Mammary epithelial cell (primary cell): ENCODE measurements at regions of chr19 and their contacts with region 1.

Region 1: GRCh38 chr19:925526-926322 is at the start of gene ARID3A:
- DNase-seq: peak; percentile 82
- H3K4me3 ChIP-seq: peak within 1 kb of the TSS; percentile 72 to 98 (median 82)
- H3K27ac ChIP-seq: peak within 1 kb of the TSS; percentile 45
- H3K4me1 ChIP-seq: peaks cover 7% of the 10 kb centered on the region
- H3K27me3 ChIP-seq: no peaks in the 10 kb centered on the region
- CTCF ChIP-seq: no peak
- total RNA-seq, gene ARID3A: 8.2 to 17.4 TPM

Region 2: DNA sequence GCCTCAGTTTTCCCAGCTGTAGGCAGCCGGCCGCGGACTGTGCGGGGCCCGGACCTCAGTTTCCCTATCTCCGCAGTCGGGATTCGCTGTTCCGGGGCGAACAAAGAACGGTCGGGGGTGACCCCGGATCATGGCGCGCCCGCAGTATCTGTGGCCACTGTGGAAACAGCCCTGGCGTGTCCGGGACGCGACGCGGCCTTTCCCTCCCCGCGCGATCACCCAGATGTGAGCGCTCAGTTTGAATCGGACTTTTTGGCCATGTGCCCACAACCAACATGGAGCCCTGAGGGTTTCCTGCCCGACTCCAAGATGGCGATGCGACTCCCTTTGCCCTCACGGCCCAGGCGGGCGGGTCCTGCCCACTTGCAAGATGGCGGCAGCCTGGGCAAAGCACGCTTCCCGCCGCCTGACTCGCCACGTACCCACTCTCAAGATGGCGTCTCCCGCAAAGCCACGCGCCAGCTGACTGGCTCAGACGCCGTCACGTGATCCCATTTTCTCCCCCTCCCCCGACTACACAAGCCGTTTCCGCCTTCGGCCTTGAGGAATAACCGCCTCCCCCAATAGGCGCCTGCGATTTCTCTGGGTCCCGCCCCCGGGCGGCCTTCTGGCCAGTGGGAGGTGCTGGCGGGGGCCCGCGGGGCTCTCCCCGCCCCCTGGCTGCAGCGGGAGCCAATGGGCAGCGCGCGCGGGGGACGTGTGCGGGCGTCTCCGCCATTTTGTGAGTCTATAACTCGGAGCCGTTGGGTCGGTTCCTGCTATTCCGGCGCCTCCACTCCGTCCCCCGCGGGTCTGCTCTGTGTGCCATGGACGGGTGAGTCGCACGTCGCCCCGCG is 128.8 kb before region 1 on chr19 and contains the start of gene PTBP1:
- CTCF ChIA-PET with region 1: no interaction called
- dilution Hi-C with region 1: no loop called
- in situ Hi-C with region 1: no loop called
- intact Hi-C with region 1: loop called (anchors 1 kb)
- DNase-seq: peak; percentile 100
- H3K4me3 ChIP-seq: peak within 1 kb of the TSS; percentile 82 to 97 (median 92)
- H3K27ac ChIP-seq: peak within 1 kb of the TSS; percentile 68
- H3K4me1 ChIP-seq: peaks cover 26% of the 10 kb centered on the region
- H3K27me3 ChIP-seq: no peaks in the 10 kb centered on the region
- CTCF ChIP-seq: no peak
- total RNA-seq, gene PTBP1: 88.9 to 383 TPM

Region 3: DNA sequence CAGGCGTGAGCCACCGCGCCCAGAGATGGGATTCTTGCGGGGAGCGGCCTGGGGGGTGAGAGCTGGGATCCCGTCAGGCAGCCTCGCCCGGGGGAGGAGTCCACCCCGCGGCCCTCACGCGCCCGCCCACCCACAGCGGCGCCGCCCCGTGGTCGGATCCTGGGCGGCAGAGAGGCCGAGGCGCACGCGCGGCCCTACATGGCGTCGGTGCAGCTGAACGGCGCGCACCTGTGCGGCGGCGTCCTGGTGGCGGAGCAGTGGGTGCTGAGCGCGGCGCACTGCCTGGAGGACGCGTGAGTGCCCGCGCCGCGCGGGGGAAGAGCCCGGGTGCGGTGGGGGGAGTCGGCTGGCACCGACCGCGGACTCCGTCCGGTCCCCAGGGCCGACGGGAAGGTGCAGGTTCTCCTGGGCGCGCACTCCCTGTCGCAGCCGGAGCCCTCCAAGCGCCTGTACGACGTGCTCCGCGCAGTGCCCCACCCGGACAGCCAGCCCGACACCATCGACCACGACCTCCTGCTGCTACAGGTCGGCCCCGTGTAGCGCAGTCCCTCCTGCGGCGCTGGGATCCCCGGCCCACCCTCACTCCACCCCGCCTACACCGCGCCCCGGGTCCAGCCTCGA is 65.1 kb before region 1 on chr19:
- CTCF ChIA-PET with region 1: no interaction called
- dilution Hi-C with region 1: no loop called
- in situ Hi-C with region 1: no loop called
- intact Hi-C with region 1: loop called (anchors 1 kb)
- DNase-seq: peak; percentile 61
- H3K4me3 ChIP-seq: peak overlapping the region in 1 of 3 experiments; percentile 20
- H3K27ac ChIP-seq: no peak overlapping the region
- H3K4me1 ChIP-seq: peaks cover 4% of the 10 kb centered on the region
- H3K27me3 ChIP-seq: no peaks in the 10 kb centered on the region
- CTCF ChIP-seq: no peak

Region 4: DNA sequence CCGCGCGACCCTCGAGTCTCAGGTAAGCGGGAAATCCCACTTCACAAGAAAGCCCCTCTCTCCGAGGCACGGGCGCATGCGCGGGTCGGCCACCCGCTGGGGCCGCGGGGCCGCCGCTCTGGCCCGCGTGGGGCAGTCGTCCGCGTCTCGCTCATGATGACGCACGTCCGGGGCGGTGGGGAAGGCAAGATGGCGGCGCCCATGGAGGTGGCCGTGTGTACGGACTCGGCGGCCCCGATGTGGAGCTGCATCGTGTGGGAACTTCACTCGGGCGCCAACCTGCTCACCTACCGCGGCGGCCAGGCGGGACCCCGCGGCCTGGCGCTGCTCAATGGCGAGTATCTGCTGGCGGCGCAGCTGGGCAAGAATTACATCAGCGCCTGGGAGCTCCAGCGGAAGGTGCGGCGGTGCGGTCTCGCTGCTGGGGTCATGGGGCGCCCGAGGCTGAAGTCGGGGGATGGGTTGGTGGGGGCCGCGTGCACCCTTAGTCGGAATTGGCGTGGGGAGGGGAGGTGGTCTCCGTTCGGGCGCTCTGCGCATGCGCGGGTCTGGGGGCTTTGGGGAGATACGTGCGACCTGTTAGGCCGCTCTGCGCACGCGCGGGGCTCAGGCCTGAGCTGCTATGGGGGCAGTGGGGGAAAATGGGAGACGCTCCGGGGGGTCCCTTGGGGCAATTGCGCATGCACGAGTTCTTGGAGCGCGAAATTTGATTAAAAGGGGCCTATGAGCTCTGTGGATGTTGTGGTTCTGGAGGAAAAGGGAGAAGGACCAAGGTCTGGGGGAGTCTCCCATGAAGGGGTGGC is 58.6 kb after region 1 on chr19 and contains the start of gene WDR18:
- CTCF ChIA-PET with region 1: no interaction called
- dilution Hi-C with region 1: no loop called
- in situ Hi-C with region 1: loop called (anchors 5 kb)
- intact Hi-C with region 1: loop called (anchors 1 kb)
- DNase-seq: peak; percentile 83
- H3K4me3 ChIP-seq: peak within 1 kb of the TSS; percentile 79 to 99 (median 99)
- H3K27ac ChIP-seq: peak within 1 kb of the TSS; percentile 81
- H3K4me1 ChIP-seq: peaks cover 15% of the 10 kb centered on the region
- H3K27me3 ChIP-seq: no peaks in the 10 kb centered on the region
- CTCF ChIP-seq: peak in 1 of 2 donors; percentile 21
- total RNA-seq, gene WDR18: 42.0 to 84.1 TPM

Region 5: GRCh38 chr19:1001538-1002166 is 75.9 kb after region 1 on chr19:
- CTCF ChIA-PET with region 1: no interaction called
- dilution Hi-C with region 1: no loop called
- in situ Hi-C with region 1: no loop called
- intact Hi-C with region 1: loop called (anchors 1 kb)
- DNase-seq: no peak
- H3K4me3 ChIP-seq: no peak overlapping the region
- H3K27ac ChIP-seq: no peak overlapping the region
- H3K4me1 ChIP-seq: peaks cover 5% of the 10 kb centered on the region
- H3K27me3 ChIP-seq: peaks cover 2% of the 10 kb centered on the region
- CTCF ChIP-seq: peak; percentile 55 to 87

Region 6: GRCh38 chr19:1103708-1104310 is 178.1 kb after region 1 on chr19 and contains the start of gene GPX4:
- CTCF ChIA-PET with region 1: no interaction called
- dilution Hi-C with region 1: no loop called
- in situ Hi-C with region 1: no loop called
- intact Hi-C with region 1: loop called (anchors 5 kb)
- DNase-seq: peak; percentile 99
- H3K4me3 ChIP-seq: peak within 1 kb of the TSS; percentile 71 to 75 (median 74)
- H3K27ac ChIP-seq: peak within 1 kb of the TSS; percentile 79
- H3K4me1 ChIP-seq: peaks cover 47% of the 10 kb centered on the region
- H3K27me3 ChIP-seq: no peaks in the 10 kb centered on the region
- CTCF ChIP-seq: no peak
- total RNA-seq, gene GPX4: 154 to 216 TPM

Region 7: GRCh38 chr19:1189419-1189818 is 263.7 kb after region 1 on chr19:
- CTCF ChIA-PET with region 1: no interaction called
- dilution Hi-C with region 1: no loop called
- in situ Hi-C with region 1: no loop called
- intact Hi-C with region 1: loop called (anchors 5 kb)
- DNase-seq: peak; percentile 55
- H3K4me3 ChIP-seq: no peak overlapping the region
- H3K27ac ChIP-seq: no peak overlapping the region
- H3K4me1 ChIP-seq: no peaks in the 10 kb centered on the region
- H3K27me3 ChIP-seq: no peaks in the 10 kb centered on the region
- CTCF ChIP-seq: no peak